ENCODE measurements at regions of chr7 and their contacts with region 1.

Region 1: DNA sequence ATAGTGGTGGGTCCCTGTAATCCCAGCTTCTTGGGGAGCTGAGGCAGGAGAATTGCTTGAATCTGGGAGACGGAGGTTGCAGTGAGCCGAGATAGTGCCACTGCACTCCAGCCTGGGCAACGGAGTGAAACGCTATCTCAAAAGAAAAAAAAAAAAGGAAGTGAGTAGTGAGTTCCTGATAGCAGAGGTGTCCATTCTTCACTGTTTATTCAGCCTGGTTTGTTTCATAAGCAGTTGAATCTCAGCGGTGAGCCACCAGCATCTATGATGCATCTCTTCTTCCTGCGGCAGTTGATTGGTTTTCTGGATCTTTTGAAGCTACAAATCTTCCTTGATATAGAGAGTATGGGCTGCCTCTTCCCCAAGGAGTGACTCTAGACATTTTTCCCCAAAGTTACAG is 316.1 kb upstream of the MTPN start:
- DNase-seq: no peak
- H3K4me3 ChIP-seq: no peak overlapping the region
- H3K27ac ChIP-seq: peak overlapping the region in 2 of 4 donors; percentile 63 to 68
- H3K4me1 ChIP-seq: no peaks in the 10 kb centered on the region
- H3K27me3 ChIP-seq: no peaks in the 10 kb centered on the region
- CTCF ChIP-seq: no peak
- EP300 ChIP-seq: no peak
- POLR2A ChIP-seq: no peak

Region 2: GRCh38 chr7:136142583-136142982 is 150.7 kb before region 1 on chr7:
- in situ Hi-C with region 1: no loop called
- intact Hi-C with region 1: loop called (anchors 10 kb)
- DNase-seq: no peak
- H3K4me3 ChIP-seq: no peak overlapping the region
- H3K27ac ChIP-seq: peak overlapping the region in 2 of 4 donors; percentile 47 to 50
- H3K4me1 ChIP-seq: no peaks in the 10 kb centered on the region
- H3K27me3 ChIP-seq: no peaks in the 10 kb centered on the region
- CTCF ChIP-seq: no peak
- EP300 ChIP-seq: no peak
- POLR2A ChIP-seq: no peak

Region 3: GRCh38 chr7:136179851-136180721 is 113.2 kb before region 1 on chr7:
- in situ Hi-C with region 1: no loop called
- intact Hi-C with region 1: no loop called
- DNase-seq: no peak
- H3K4me3 ChIP-seq: no peak overlapping the region
- H3K27ac ChIP-seq: no peak overlapping the region
- H3K4me1 ChIP-seq: no peaks in the 10 kb centered on the region
- H3K27me3 ChIP-seq: no peaks in the 10 kb centered on the region
- CTCF ChIP-seq: no peak
- EP300 ChIP-seq: no peak
- POLR2A ChIP-seq: no peak

Region 4: DNA sequence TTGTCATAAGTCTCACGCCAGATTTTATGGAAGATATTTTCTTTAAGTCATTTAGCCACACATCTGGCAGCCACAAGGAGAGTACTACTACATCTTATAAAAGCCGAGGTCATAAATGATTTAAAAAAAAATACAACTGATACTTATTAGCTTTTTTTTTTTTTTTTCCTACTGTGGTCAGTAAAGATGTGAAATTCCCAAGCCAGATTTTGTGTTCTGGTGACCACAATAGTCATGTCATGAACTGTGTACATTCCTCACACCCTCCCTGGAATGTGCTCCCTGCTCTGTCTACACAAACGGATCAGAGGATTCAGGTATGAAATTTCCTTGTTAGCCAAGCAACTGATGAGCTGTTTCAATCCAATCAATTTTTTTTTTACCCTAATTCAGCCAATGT is 629.8 kb after region 1 on chr7:
- in situ Hi-C with region 1: no loop called
- intact Hi-C with region 1: no loop called
- DNase-seq: no peak
- H3K4me3 ChIP-seq: no peak overlapping the region
- H3K27ac ChIP-seq: no peak overlapping the region
- H3K4me1 ChIP-seq: no peaks in the 10 kb centered on the region
- H3K27me3 ChIP-seq: no peaks in the 10 kb centered on the region
- CTCF ChIP-seq: no peak
- EP300 ChIP-seq: no peak
- POLR2A ChIP-seq: no peak